SK-N-SH (cell line): ENCODE measurements at regions of chr5 and their contacts with region 1.

Region 1: GRCh38 chr5:102782311-102782770 is 27.2 kb downstream of the PAM start:
- DNase-seq: no peak
- H3K4me3 ChIP-seq: no peak overlapping the region
- H3K27ac ChIP-seq: no peak overlapping the region
- H3K4me1 ChIP-seq: peaks cover 5 to 28% of the 10 kb centered on the region in 2 experiments
- H3K27me3 ChIP-seq: no peaks in the 10 kb centered on the region
- CTCF ChIP-seq: no peak
- EP300 ChIP-seq: no peak
- RAD21 ChIP-seq: no peak

Region 2: GRCh38 chr5:102754767-102755431 is 27.4 kb before region 1 on chr5 and contains the start of gene PAM:
- CTCF ChIA-PET with region 1: interaction called, 15 read pairs
- POLR2A ChIA-PET with region 1: interaction called, 3 read pairs
- DNase-seq: peak; percentile 93
- H3K4me3 ChIP-seq: peak within 1 kb of the TSS; percentile 72 to 96
- H3K27ac ChIP-seq: peak within 1 kb of the TSS; percentile 89
- H3K4me1 ChIP-seq: peaks cover 20 to 22% of the 10 kb centered on the region in 2 experiments; a peak in 3 of 4 replicates
- H3K27me3 ChIP-seq: no peaks in the 10 kb centered on the region
- CTCF ChIP-seq: no peak
- EP300 ChIP-seq: no peak
- RAD21 ChIP-seq: no peak
- polyA plus RNA-seq, gene PAM: 507 and 662 TPM in 2 replicates

Region 3: DNA sequence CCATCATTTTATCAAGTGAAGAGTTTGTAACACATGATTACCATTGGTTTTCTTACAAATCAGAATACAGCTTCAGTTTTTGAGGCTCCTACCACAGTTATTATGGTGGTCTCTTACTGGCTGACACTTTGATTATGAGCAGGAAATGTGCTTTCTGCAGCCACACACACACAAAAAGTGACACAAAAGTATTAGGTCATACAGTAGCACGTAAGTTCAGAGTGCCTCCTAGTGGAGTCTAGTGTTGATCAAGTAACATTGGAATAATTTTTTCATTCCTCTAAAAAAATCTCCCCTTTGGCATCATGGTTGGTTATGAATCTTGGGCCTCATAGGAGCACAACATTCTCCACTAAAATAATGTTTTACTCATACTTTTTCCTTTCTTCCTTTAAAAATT is 10.4 kb after region 1 on chr5:
- CTCF ChIA-PET with region 1: interaction called, 23 read pairs
- POLR2A ChIA-PET with region 1: no interaction called
- DNase-seq: no peak
- H3K4me3 ChIP-seq: no peak overlapping the region
- H3K27ac ChIP-seq: no peak overlapping the region
- H3K4me1 ChIP-seq: peaks cover 16 to 23% of the 10 kb centered on the region in 2 experiments; a peak in 3 of 4 replicates
- H3K27me3 ChIP-seq: no peaks in the 10 kb centered on the region
- CTCF ChIP-seq: peak; percentile 49
- EP300 ChIP-seq: no peak
- RAD21 ChIP-seq: peak; percentile 56; the same call in 1 of the 2 replicates